ENCODE measurements at regions of chr5 and their contacts with region 1.

Region 1: DNA sequence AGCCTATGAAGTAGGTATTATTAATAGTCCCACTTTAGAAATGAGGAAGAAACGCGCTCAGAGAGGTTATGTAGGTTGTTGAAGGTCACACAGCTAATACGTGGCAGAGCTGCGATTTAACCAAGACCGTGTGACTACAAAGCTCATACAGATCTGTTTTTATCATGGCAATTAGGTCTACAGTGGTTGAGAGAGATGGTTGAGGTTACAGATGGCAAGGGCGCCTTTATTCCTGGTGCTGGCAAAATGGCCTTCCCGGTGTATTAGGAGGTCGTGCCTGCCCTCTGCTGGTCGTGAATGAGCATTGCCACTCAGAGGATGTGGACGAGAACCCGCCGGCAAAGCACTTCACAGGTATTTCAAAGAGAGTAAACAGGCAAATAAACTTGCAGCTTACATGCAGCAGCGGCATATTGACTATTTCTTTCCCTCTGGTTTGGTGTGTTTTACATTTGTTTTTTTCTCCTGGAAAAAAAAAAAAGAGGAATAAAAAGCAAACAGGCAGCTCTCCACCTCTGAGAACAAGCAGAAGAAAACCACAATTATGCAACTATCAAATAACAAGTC is 65.3 kb upstream of the EGFLAM start:
- DNase-seq: peak; percentile 66 to 76 (median 74)
- ATAC-seq: peak; percentile 94 to 99 (median 97)
- H3K4me3 ChIP-seq: no peak overlapping the region
- H3K27ac ChIP-seq: no peak overlapping the region
- H3K4me1 ChIP-seq: no peaks in the 10 kb centered on the region
- H3K27me3 ChIP-seq: no peaks in the 10 kb centered on the region
- CTCF ChIP-seq: peak; percentile 88 to 92 (median 90)
- POLR2A ChIP-seq: no peak

Region 2: DNA sequence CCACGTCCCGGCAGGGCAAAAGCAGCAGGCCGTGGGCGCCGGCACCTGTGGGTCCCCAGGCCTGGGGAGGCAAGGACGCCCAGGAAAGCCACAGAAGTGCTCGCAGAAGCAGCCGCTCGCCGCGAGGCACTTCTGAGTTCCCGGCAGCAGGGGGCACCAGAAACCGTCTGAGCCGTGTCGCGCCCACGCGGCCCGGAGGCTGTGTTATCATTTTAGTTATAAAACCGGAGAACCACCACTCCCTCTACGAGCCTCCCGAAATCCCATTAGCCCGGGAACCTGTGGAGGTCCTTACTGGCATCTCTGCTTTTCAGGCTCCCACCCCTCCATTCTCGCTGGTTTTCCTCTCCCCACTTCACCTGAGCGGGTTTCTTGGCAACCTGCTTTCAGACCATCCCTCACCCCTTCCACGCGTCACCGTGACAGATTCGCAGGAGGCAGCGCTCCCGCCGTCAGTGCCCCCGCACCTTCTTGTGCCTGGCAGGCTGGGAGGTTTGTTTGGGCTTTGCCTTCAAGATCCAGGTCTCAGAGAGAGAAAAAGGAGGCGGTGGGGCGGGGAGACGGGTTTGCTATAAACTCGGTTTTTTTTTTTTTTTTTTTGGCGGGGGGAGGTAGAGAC is 355.6 kb before region 1 on chr5:
- intact Hi-C with region 1: loop called (anchors 2 to 5 kb)
- DNase-seq: peak; percentile 79 to 85 (median 80)
- ATAC-seq: peak; percentile 86 to 92 (median 87)
- H3K4me3 ChIP-seq: peak overlapping the region; percentile 31 to 57 (median 33)
- H3K27ac ChIP-seq: no peak overlapping the region
- H3K4me1 ChIP-seq: peaks cover 0 to 41% (median 5%) of the 10 kb centered on the region in 4 donors
- H3K27me3 ChIP-seq: peaks cover 0 to 12% of the 10 kb centered on the region in 2 donors
- CTCF ChIP-seq: peak; percentile 80 to 90 (median 86)
- POLR2A ChIP-seq: no peak

Region 3: GRCh38 chr5:38237681-38238080 is 44.6 kb after region 1 on chr5:
- intact Hi-C with region 1: no loop called
- DNase-seq: no peak
- ATAC-seq: peak in 1 of 4 donors; percentile 73
- H3K4me3 ChIP-seq: no peak overlapping the region
- H3K27ac ChIP-seq: no peak overlapping the region
- H3K4me1 ChIP-seq: no peaks in the 10 kb centered on the region
- H3K27me3 ChIP-seq: no peaks in the 10 kb centered on the region
- CTCF ChIP-seq: no peak
- POLR2A ChIP-seq: no peak